ENCODE measurements at regions of chr11 and their contacts with region 1.

Region 1: GRCh38 chr11:86193297-86194095 is 51.1 kb upstream of the EED start:
- DNase-seq: no peak
- H3K4me3 ChIP-seq: peak overlapping the region; percentile 3 to 40 (median 19)
- H3K27ac ChIP-seq: peak overlapping the region; percentile 21 to 70 (median 54)
- H3K4me1 ChIP-seq: peaks cover 0 to 27% (median 6%) of the 10 kb centered on the region in 3 donors
- H3K27me3 ChIP-seq: no peaks in the 10 kb centered on the region
- CTCF ChIP-seq: peak; percentile 29 to 87 (median 72)
- POLR2A ChIP-seq: no peak

Region 2: GRCh38 chr11:86041975-86042378 is 151.5 kb before region 1 on chr11:
- intact Hi-C with region 1: loop called (anchors 5 kb)
- DNase-seq: no peak
- H3K4me3 ChIP-seq: peak overlapping the region in 3 of 4 donors; percentile 5 to 26 (median 13)
- H3K27ac ChIP-seq: peak overlapping the region in 3 of 4 donors; percentile 4 to 56 (median 53)
- H3K4me1 ChIP-seq: peaks cover 0 to 68% (median 41%) of the 10 kb centered on the region in 3 donors
- H3K27me3 ChIP-seq: no peaks in the 10 kb centered on the region
- CTCF ChIP-seq: peak; percentile 86 to 98 (median 91)
- POLR2A ChIP-seq: no peak

Region 3: GRCh38 chr11:86052693-86053641 is 140.5 kb before region 1 on chr11:
- intact Hi-C with region 1: no loop called
- DNase-seq: no peak
- H3K4me3 ChIP-seq: no peak overlapping the region
- H3K27ac ChIP-seq: peak overlapping the region in 1 of 4 donors; percentile 5
- H3K4me1 ChIP-seq: peaks cover 15 to 97% (median 35%) of the 10 kb centered on the region in 3 donors
- H3K27me3 ChIP-seq: no peaks in the 10 kb centered on the region
- CTCF ChIP-seq: no peak
- POLR2A ChIP-seq: no peak

Region 4: DNA sequence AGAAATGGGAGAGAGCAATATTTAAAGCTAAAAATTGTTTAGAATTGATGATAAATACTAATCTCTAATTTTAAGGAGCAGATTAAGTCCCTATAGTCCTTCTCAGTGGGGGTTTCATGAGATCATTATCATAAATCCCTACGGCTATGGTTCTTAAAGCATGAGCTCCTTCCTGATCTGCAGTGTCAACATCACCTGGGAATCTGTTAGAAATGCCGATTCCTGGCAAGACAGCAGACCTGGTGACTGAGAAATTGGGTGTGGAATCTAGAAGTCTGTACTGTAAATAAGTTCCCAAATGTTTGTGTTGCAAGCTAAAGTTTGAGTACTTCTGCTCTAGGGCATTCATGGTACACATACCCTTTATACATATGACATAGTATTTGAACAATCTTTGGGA is 121.2 kb after region 1 on chr11:
- intact Hi-C with region 1: no loop called
- DNase-seq: no peak
- H3K4me3 ChIP-seq: no peak overlapping the region
- H3K27ac ChIP-seq: no peak overlapping the region
- H3K4me1 ChIP-seq: peaks cover 0 to 6% (median 0%) of the 10 kb centered on the region in 3 donors
- H3K27me3 ChIP-seq: no peaks in the 10 kb centered on the region
- CTCF ChIP-seq: no peak
- POLR2A ChIP-seq: no peak

Measured in esophagus squamous epithelium (tissue), 5 donors.